Cardiac septum (tissue), 1 donor: ENCODE measurements at regions of chr16 and their contacts with region 1.

Region 1: DNA sequence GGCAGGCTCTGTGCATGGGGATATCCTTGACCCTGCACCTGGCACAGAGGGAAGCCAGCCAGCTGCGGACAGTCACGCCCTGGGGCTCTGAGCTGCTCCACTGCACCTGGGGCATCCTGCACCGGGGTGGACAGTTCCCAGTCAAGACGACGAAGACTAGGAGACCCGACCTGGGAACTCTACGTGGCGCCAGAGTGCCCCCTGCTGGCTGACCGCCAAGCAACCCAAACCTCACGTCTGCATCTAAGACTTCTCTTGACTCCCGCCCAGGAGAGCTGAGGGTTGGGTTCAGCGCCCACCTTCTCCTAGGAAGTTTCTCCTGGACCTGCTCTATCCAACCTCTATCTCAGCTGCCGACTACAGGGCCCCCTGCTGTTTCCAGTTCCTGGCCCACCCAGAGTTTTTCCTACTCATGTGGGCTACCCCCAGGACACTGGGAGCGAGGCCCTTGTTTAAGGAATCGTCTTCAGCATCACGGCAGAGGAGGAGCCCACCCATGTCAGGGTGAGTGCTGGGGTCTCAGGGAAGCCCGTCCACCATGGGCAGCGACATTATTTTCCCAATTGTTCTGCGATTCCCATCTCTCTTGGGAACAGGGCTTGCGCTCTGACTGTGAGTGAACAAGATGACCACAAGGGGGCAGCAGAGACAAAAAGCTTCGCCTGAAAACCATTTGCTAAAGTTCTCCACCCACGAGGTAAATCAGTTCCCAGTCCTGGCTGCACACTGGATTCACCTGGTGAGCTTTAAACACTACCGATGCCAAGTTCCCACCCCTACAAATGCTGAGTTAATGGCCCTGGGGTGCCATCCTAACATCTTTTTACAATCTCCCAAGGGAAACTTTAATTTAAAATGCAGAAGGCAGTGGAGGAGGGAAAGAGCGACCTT is 29.3 kb downstream of the TLE7 start:
- DNase-seq: no peak

Region 2: DNA sequence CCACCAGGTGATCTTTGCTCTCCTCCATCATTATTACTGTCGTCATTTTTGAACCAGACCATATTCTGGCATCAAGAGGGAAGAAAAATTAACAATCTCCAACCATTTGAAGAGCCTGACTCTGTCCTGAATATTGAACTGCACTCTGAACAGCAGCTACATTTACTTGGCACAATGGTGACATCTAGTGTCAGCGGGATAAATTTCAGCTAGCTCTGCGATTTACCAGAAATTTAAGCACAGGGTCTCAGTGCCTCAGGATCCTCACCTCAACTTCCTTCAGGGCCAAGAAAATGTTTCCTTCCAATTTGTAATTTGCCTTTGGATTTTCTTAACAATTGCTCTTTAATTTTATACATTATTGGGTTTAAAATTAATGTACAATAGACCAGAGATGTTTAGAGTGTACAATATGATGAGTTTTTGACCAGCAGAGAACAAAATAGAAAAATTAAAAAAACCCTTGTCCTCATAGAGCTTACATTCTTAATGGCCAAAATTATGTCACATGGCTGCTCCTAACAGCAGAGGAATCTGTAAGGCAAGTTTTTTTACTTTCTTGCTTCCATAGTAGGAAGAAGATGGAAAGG is 87.4 kb after region 1 on chr16:
- intact Hi-C with region 1: loop called (anchors 1 kb)
- DNase-seq: no peak

Region 3: DNA sequence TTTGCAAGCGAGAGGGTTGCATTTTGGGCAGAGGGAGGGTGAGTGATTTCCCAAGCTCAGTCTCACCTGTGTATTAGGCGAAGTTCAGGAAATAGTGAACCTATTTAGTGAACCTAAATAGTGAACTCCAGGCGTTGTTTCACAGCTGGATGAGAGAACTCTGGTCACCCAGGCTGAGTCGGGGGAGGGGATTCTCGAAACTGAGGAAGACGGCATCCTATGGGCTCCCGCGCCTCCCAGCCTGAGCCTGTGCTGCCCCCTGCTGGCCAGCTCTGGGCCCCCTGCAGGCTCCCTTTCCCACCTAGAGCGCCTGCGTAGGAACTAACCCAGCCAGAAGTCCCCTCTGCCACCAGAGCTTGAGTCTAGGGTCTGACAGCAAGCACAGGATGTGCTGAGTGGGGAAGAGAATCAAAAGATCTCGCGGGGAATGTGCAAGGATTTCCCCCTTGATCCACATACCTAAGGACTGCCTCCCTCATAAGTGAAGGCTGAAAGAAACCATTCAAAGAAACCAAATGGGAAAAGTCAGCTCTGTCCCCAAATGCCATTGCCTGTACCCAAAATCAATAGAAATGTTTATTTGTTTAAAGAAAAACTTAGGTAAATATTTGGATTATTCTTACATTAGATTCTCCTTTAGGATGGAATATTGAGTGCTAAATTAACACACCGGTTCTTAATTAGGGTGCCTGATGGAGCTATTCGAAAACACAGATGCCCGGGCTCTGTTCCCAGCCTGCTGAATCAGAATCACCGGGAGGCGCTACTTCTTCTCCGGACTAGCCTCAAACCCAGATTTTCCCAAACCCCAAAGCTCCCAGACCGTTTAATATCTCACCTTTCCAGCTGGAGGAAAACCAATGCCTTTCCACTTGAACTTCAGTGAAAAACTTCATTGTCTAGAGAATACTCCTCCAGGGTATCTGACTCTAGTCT is 198.7 kb after region 1 on chr16:
- intact Hi-C with region 1: loop called (anchors 2 kb)
- DNase-seq: peak; percentile 79